ENCODE measurements at regions of chr2 and their contacts with region 1.

Region 1: DNA sequence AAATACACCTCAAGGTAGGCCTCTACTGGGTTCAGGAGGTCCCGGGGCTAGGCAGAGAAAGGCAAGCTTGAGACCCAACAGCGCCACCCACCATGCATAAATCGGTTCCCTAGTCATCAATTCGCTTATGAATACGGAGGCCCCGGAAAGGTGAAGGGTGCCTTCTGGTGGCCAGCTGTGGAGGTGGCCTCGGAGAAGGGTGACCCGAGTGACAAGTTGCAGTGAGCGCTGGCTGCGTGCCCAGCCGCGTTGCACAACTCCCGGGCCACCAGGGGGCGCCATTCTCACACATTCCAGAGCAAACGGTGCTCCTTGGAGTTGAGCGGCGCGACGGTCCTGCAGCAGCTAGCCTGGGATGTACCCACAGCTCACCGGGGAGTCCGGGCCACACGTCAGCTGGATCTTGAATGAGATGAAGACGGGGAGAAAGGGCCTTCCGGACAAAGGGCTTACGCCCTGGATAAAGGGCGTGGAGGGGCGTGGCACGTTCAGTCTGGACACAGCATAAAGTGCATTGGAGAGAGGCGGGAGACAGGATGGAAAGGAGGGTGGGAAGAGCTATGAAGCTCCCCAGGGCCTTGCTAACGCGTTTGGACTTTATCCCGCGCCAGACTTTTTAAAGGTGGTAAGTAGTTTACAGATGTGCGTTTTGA is 20.4 kb downstream of the TMSB10 start:
- DNase-seq: peak; percentile 95
- H3K4me3 Mint-ChIP-seq: peak overlapping the region; percentile 96
- H3K27ac Mint-ChIP-seq: peak overlapping the region; percentile 95
- H3K4me1 Mint-ChIP-seq: peaks cover 46% of the 10 kb centered on the region
- H3K27me3 Mint-ChIP-seq: no peaks in the 10 kb centered on the region

Region 2: DNA sequence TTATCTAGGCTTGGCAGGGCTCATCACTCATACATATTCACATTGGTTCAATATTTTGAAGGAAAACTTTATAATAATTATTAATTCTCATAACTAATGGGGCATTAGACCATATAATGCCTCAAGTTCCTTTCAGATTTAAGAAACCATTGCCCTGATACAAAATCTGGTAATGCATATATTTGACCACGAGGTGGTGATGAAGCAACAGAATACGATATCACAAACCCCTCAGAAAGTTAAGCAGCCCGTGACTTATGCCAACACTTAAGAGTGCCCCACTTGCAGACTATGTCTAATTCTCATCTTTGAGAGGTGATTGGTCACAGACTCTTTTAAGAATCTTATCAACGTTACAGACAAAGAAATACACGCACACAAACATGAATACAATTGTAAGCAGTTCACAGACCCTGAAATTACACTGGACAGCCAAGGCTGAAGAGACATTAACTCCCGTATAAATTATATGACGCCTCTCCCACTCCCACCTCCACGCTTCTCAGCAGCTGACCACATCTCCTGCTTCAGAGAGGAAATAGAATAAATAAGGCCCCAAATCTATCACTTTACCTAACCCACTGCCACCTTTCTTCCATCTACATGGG is 430.2 kb before region 1 on chr2:
- intact Hi-C with region 1: loop called (anchors 1 kb)
- DNase-seq: peak; percentile 16
- H3K4me3 Mint-ChIP-seq: no peak overlapping the region
- H3K27ac Mint-ChIP-seq: no peak overlapping the region
- H3K4me1 Mint-ChIP-seq: peaks cover 7% of the 10 kb centered on the region
- H3K27me3 Mint-ChIP-seq: no peaks in the 10 kb centered on the region

Region 3: DNA sequence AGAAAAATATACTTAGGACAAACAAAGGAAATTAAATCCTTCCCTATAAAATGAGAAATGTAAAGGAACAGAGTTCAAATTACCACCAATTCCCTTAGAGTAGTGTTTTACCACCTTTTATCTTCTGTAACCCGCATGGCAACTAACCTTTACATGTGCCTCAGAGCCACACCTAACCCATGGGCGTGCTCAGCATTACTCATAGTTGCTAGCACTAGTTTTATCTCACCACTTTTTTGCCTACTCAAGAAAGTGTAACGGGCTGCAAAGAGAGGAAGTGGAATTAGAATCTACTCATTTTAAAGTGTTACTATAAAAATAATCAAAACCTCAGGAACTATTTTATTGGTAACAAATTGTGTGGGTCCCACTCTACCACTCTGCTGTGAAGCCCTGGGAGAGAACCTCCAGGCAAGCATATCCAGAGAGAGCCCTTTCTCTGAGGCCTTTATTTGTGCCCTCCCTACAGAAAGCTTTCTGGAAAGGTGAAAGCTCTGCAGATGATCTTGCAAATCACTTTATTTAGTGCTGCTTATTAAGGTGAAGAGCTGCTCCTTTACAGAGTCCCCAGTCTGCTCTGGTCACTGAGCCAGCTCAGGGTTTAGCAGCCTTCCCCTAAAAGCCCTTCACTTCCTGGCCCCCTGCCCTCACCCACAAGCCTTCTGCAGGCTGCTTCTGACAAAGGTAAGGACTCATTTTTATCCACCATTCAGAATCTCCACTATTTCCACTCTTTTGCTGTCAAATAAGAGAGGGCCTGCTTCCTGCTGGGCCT is 143.7 kb before region 1 on chr2:
- intact Hi-C with region 1: loop called (anchors 1 kb)
- DNase-seq: peak; percentile 44
- H3K4me3 Mint-ChIP-seq: no peak overlapping the region
- H3K27ac Mint-ChIP-seq: peak overlapping the region; percentile 85
- H3K4me1 Mint-ChIP-seq: peaks cover 69% of the 10 kb centered on the region
- H3K27me3 Mint-ChIP-seq: no peaks in the 10 kb centered on the region

Region 4: DNA sequence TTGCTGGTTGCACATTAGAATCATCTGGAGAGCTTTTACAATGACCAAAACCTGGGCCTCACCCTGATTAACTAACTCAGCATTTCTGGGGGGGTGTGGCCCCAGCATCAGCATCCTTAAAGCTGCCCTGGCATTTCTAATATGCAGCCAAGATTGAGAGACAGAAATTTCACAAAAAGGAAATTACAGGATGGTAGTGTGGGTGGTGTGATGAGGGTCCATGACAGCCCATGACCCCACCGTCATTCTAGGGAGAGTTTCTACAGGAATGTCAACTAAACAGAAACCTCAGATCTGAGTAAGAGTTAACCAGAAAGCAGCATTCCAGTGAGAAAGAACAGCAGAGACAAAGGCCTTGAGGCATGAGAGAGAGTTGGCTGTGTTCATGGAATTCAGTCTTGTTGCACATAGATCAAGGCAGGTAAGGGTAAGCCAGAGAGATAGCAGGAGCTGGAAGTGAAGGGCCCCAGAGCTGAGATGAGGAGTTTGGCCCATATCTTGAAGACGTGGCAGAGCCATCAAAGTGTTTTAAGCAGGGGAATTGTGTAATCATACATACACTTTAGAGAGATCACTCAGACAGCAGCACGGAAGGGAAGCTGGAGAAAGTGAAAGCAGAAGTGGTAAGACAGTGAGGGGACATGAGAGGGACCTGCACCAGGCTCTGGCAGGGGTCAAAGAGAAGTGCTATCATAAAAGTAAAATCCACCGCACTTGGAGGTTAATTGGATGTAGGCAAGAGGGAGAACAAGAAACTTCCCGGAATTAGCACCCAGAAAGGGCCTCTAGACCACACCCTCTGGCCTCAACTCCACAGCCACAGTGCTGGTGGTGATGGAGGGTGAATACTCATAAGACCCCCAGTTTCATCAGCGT is 37.2 kb before region 1 on chr2:
- intact Hi-C with region 1: loop called (anchors 2 kb)
- DNase-seq: peak; percentile 57
- H3K4me3 Mint-ChIP-seq: peak overlapping the region; percentile 62
- H3K27ac Mint-ChIP-seq: peak overlapping the region; percentile 97
- H3K4me1 Mint-ChIP-seq: peaks cover 69% of the 10 kb centered on the region
- H3K27me3 Mint-ChIP-seq: no peaks in the 10 kb centered on the region

Region 5: DNA sequence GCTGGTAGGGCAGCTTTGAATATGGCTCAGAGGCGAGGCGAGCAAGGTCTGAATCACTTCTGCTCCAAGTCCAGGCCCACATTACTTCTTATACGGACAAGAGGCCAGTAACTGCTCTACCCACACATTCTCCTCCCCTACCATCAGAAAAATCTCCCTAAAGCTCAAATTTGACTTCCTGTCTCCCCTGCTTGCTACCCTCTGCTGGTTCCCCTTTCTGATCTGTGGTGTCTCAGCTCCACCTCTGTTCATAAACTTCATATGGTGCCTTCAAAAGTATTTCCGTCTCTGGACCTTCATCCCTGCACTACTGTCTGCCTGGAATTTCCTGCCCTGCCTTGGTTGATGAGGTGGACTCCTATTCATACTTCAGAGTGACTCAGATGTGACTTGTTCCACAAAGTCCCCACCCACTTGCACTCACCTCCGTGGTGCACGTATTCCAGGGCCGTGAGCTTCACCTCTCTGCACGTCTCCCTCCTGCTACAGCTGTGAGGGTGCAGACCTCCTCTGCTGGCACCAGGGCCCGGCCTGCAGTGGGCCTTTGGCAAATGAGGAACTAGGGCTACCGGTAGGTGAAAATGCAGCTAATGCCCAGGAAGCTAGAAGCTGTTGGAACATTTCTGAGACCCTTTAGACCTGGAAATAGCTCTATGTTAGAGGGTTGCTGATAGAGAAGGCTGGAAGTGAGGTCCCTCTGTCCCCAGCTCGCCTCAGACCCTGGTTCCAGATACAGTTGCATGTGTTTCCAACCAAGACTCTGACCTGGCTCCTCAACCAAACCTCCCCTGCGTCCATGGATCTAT is 20.6 kb after region 1 on chr2:
- intact Hi-C with region 1: loop called (anchors 1 kb)
- DNase-seq: peak; percentile 63
- H3K4me3 Mint-ChIP-seq: peak overlapping the region; percentile 43
- H3K27ac Mint-ChIP-seq: peak overlapping the region; percentile 91
- H3K4me1 Mint-ChIP-seq: peaks cover 40% of the 10 kb centered on the region
- H3K27me3 Mint-ChIP-seq: no peaks in the 10 kb centered on the region

Region 6: DNA sequence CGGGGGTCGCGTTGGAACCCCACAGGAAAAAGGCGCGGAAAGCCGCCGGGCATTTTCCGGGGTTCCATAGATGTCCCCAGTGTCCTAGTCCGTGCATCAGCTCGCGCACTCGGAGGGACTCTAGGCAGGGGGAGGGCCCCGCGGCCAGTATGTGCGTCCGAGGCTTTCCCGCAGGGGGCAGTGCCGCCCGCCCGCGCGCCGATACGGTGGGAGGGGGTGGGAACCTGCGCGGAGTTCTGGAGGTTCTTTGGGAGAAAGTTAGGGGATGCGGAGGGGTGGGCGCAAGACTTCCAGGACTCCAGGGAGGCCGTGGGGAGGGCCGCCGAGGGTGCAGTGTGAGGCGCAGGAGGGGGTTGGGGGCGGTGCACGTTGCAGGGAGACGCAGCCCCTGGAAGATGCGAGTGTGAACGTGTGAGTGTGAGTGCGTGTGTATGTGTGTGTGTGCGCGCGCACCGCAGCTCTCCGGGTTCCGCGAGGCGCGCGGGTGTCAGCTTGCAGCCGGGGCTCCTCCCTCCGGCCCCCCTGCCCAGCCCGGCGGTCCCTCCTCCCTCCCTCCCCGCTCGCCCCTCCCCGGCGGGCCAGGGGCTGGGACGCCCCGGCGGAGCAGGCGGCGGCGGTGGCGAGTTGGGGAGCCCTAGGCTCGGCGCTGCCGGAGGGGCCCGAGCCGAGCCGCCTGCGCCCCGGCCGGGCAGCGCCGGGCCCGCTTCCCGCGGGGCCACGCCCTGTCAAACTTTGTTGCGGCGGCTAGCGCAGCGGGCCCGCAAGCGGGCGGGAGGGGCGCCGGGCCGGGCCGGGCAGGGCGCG is 207.2 kb after region 1 on chr2 and contains the start of gene TCF7L1:
- intact Hi-C with region 1: no loop called
- DNase-seq: peak; percentile 20
- H3K4me3 Mint-ChIP-seq: peak within 1 kb of the TSS; percentile 72
- H3K27ac Mint-ChIP-seq: no peak within 1 kb of the TSS
- H3K4me1 Mint-ChIP-seq: peaks cover 8% of the 10 kb centered on the region
- H3K27me3 Mint-ChIP-seq: peaks cover 63% of the 10 kb centered on the region
- total RNA-seq, gene TCF7L1: not detected in 2 replicates

Region 7: DNA sequence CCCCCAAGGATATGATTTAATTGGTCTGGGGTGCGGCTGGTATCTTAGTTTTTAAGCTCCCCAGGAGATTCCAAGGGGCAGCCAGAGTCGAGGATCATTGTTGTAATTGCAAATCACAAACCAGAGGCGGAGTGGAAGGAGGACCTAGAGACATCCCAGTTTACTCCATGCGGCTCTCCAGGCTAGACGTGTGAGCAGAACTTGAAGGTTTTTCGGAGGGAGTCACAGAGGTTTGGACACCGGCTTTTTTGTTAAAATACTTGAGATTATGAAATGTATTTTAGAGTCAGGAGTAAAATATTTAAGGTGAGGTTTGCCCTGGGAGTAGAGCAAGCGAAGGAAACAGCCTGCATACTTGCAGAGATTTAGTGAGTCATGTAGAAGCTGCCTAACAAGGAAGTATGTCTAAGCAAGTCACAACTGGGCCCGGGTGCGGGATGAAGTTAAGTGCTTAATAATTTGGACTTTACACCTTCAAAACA is 362.4 kb after region 1 on chr2:
- intact Hi-C with region 1: loop called (anchors 2 kb)
- DNase-seq: no peak
- H3K4me3 Mint-ChIP-seq: no peak overlapping the region
- H3K27ac Mint-ChIP-seq: no peak overlapping the region
- H3K4me1 Mint-ChIP-seq: peaks cover 29% of the 10 kb centered on the region
- H3K27me3 Mint-ChIP-seq: no peaks in the 10 kb centered on the region